ENCODE measurements at regions of chr2 and their contacts with region 1.

Region 1: DNA sequence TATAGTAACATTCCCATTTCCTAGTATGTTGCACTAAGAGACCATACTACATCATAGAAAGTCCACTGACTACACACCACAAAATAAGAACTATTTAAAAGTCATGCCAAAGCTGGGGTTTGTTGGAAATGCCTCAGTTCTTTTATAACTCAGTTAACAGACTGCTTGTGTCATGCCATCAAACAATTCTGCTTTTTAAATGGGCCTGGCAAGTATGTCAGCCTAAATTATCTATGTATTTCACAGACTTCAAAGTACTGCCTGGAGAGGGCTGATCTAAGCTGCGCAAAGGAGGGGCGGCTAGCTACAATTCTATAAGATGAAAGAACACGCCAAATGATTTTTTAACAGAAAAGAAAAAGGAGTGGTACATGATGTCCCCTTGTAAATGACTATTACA is 49.6 kb downstream of the FARSB start:
- DNase-seq: no peak
- ATAC-seq: no peak
- H3K4me3 ChIP-seq: no peak overlapping the region
- H3K27ac ChIP-seq: no peak overlapping the region
- H3K4me1 ChIP-seq: no peaks in the 10 kb centered on the region
- H3K27me3 ChIP-seq: no peaks in the 10 kb centered on the region
- CTCF ChIP-seq: no peak

Region 2: DNA sequence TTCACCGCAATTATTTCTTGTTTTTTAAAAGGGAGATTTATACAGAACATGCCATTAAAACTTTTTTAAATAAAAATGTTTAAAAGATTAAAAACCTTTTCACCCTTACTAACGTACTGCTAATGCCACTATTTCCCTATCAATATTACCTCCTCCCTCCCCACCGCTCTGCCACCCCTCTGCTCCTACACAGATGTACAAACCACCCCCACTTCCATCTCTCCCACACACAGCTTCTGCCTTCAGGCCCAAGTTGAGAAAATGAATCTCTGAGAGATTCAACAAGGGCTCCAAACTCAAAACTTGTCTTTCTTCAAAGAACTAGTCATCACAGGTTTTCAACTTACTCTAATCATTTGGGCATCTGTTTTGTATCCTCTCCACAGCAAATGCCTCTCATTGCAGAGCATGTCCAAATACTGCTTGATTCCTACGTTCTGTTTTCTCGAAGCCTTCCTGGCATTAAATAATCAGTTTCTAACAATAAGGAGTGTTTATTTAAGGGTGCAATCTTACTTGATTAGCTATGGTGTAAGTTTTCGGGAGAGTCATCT is 17.5 kb after region 1 on chr2:
- intact Hi-C with region 1: loop called in 1 of 2 experiments (anchors 2 kb)
- DNase-seq: no peak
- ATAC-seq: no peak
- H3K4me3 ChIP-seq: no peak overlapping the region
- H3K27ac ChIP-seq: no peak overlapping the region
- H3K4me1 ChIP-seq: no peaks in the 10 kb centered on the region
- H3K27me3 ChIP-seq: no peaks in the 10 kb centered on the region
- CTCF ChIP-seq: no peak

Region 3: DNA sequence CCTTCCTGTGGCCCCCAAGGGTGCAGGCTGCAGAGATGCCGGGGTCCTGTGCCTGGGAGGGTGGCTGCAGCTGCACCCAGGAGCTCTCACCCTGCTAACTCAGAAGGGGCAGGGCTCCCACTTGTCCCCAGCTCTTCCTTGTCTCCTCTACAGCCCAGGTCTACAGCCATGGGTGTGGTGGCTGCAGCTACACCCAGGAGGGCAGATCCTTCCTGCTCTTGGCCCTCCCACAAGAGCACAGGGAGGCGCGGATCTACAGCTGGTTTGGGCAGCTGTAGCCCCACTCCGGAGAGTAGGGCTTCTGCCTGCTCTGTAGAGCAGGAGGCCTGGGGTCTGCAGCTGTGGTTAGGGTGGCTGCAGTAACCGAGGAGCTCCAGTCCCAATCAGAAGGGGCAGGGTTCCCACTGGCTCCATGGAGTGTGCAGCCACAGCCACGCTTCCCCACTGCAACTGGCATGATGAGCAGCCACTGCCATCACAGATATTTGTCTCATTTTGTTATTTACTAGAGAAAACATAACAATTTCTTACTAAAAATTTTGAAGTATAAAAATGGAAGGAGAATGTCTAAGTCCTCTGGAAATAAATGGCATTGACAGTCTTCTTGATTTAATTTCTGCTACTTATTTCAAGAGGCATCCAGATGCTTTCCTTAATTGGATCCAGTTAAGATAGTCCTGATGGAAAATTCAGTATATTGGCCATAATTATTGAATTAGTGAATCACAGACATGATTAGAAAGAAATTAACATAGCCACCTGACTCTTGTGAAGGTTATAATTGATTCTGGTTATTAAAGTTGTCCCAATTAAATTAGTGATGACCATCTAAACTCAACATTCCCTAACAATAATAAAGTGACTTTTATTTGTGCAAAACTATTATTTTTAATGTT is 679.3 kb after region 1 on chr2:
- intact Hi-C with region 1: no loop called
- DNase-seq: no peak
- ATAC-seq: no peak
- H3K4me3 ChIP-seq: no peak overlapping the region
- H3K27ac ChIP-seq: no peak overlapping the region
- H3K4me1 ChIP-seq: no peaks in the 10 kb centered on the region
- H3K27me3 ChIP-seq: no peaks in the 10 kb centered on the region
- CTCF ChIP-seq: no peak